GM12878 (cell line): ENCODE measurements at regions of chr12 and their contacts with region 1.

Region 1: GRCh38 chr12:11658791-11659190 is 9.3 kb downstream of the ETV6 start:
- DNase-seq: no peak
- ATAC-seq: no peak
- H3K4me3 ChIP-seq: no peak overlapping the region
- H3K27ac ChIP-seq: no peak overlapping the region
- H3K4me1 ChIP-seq: peaks cover 23% of the 10 kb centered on the region
- H3K27me3 ChIP-seq: no peaks in the 10 kb centered on the region
- CTCF ChIP-seq: no peak
- EP300 ChIP-seq: no peak
- POLR2A ChIP-seq: no peak
- RAD21 ChIP-seq: no peak

Region 2: DNA sequence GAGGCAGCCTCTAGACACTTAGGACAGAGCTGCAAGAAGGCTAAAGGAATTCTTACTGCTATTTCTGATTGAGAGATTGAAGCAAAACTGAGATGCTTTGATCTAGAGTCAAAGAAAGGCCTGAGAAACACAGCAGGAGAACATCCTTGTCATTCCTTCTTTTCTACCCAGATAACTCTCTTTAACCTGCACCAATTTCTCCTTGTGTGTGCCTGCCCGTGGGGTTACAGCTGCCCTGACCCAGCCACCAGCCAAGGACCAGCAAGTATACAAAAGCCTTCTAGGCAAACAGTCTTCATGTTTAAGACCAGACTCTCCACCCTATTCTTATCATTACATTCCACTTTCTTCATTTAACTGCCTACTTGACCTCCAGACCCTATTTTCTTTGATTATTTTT is 181.7 kb before region 1 on chr12:
- CTCF ChIA-PET with region 1: no interaction called
- POLR2A ChIA-PET with region 1: no interaction called
- RAD21 ChIA-PET with region 1: no interaction called
- SMC1A ChIA-PET with region 1: no interaction called
- in situ Hi-C with region 1: no loop called
- intact Hi-C with region 1: no loop called
- DNase-seq: no peak
- ATAC-seq: no peak
- H3K4me3 ChIP-seq: no peak overlapping the region
- H3K27ac ChIP-seq: no peak overlapping the region
- H3K4me1 ChIP-seq: no peaks in the 10 kb centered on the region
- H3K27me3 ChIP-seq: no peaks in the 10 kb centered on the region; a peak in 1 of 4 replicates
- CTCF ChIP-seq: no peak
- EP300 ChIP-seq: no peak
- POLR2A ChIP-seq: no peak
- RAD21 ChIP-seq: no peak

Region 3: DNA sequence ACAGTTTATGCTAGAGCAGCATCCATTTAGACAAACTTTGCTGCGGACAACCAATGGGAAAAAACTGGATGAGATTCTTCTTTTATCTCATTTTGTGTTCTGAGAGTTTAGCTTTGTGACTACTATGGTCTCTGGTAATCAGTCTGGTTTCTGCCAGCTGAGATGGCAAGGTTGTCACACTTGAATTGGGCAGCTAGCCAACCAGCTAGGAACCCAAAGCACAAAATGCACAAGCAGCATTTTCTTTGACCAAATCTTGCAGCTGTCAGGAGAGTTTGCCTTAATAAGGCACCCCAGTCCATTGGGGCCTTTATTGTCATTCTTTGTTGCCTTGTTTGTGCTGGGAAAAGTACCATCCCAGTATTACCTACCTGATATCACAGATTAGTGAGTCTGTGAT is 43.3 kb before region 1 on chr12:
- CTCF ChIA-PET with region 1: no interaction called
- POLR2A ChIA-PET with region 1: no interaction called
- RAD21 ChIA-PET with region 1: no interaction called
- SMC1A ChIA-PET with region 1: no interaction called
- in situ Hi-C with region 1: no loop called
- intact Hi-C with region 1: no loop called
- DNase-seq: no peak
- ATAC-seq: no peak
- H3K4me3 ChIP-seq: no peak overlapping the region
- H3K27ac ChIP-seq: no peak overlapping the region
- H3K4me1 ChIP-seq: no peaks in the 10 kb centered on the region
- H3K27me3 ChIP-seq: no peaks in the 10 kb centered on the region
- CTCF ChIP-seq: no peak
- EP300 ChIP-seq: no peak
- POLR2A ChIP-seq: no peak
- RAD21 ChIP-seq: no peak

Region 4: GRCh38 chr12:11638315-11638916 is 20.4 kb before region 1 on chr12:
- CTCF ChIA-PET with region 1: no interaction called
- POLR2A ChIA-PET with region 1: no interaction called
- RAD21 ChIA-PET with region 1: no interaction called
- SMC1A ChIA-PET with region 1: no interaction called
- in situ Hi-C with region 1: no loop called
- intact Hi-C with region 1: no loop called
- DNase-seq: no peak
- ATAC-seq: no peak
- H3K4me3 ChIP-seq: no peak overlapping the region
- H3K27ac ChIP-seq: no peak overlapping the region
- H3K4me1 ChIP-seq: no peaks in the 10 kb centered on the region
- H3K27me3 ChIP-seq: no peaks in the 10 kb centered on the region
- CTCF ChIP-seq: no peak
- EP300 ChIP-seq: no peak
- POLR2A ChIP-seq: no peak
- RAD21 ChIP-seq: no peak

Region 5: DNA sequence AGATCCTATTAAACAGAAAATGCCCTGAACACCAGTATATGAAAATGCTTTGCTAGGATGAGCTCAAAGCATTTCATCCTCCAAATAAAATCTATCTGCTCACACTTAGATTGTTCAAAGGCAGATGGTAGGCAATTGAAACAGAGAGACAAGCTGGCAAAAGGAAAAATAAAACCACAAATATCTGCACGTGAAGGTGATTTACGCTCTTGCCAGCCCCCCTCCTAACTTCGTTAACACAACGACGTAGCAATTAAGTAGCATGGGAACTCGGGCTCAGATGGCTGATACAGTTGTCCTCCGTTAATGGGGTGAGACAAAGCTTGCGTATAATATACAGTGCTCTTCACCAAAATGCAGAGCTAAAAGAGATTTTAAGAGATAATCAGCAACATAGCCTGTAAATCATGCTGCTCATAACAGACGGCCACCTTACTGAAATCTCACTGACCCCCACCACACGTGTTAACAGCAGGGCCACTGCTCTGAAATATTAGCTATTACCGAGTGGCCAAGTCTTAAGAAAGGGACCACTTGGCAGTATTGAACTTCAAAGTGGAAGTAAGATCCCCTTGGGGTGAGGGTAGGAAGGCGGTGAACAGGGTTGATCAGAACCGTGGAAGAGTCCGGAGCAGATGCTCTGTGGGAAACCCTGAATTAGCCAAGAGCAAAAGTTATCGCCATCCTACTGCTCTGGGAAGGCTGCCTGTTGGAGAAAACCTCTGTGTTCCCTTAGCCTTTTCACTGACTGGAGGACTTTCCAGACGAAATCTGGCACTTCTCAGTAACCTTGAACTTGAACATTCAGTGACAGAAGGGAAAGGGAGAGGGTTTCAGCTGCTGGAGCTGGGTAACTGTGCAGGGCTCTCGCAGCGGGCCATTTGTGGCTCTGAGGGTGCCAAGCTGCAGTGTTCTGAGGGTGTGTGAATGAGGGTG is 13.7 kb after region 1 on chr12:
- CTCF ChIA-PET with region 1: interaction called, 3 read pairs
- POLR2A ChIA-PET with region 1: interaction called, 3 read pairs
- RAD21 ChIA-PET with region 1: interaction called, 3 read pairs
- SMC1A ChIA-PET with region 1: interaction called, 32 read pairs
- in situ Hi-C with region 1: no loop called
- intact Hi-C with region 1: no loop called
- DNase-seq: no peak
- ATAC-seq: no peak
- H3K4me3 ChIP-seq: no peak overlapping the region
- H3K27ac ChIP-seq: no peak overlapping the region
- H3K4me1 ChIP-seq: peaks cover 6% of the 10 kb centered on the region
- H3K27me3 ChIP-seq: no peaks in the 10 kb centered on the region
- CTCF ChIP-seq: no peak
- EP300 ChIP-seq: no peak
- POLR2A ChIP-seq: no peak
- RAD21 ChIP-seq: no peak

Region 6: GRCh38 chr12:11684393-11684792 is 25.6 kb after region 1 on chr12:
- CTCF ChIA-PET with region 1: interaction called, 3 read pairs
- POLR2A ChIA-PET with region 1: interaction called, 3 read pairs
- RAD21 ChIA-PET with region 1: interaction called, 4 read pairs
- SMC1A ChIA-PET with region 1: interaction called, 16 read pairs
- in situ Hi-C with region 1: no loop called
- intact Hi-C with region 1: no loop called
- DNase-seq: no peak
- ATAC-seq: 0 out of 3 replicates have a peak, but pooled peaks have one; percentile 17
- H3K4me3 ChIP-seq: no peak overlapping the region
- H3K27ac ChIP-seq: no peak overlapping the region
- H3K4me1 ChIP-seq: peaks cover 12% of the 10 kb centered on the region
- H3K27me3 ChIP-seq: no peaks in the 10 kb centered on the region
- CTCF ChIP-seq: no peak
- EP300 ChIP-seq: no peak
- POLR2A ChIP-seq: no peak
- RAD21 ChIP-seq: no peak

Region 7: DNA sequence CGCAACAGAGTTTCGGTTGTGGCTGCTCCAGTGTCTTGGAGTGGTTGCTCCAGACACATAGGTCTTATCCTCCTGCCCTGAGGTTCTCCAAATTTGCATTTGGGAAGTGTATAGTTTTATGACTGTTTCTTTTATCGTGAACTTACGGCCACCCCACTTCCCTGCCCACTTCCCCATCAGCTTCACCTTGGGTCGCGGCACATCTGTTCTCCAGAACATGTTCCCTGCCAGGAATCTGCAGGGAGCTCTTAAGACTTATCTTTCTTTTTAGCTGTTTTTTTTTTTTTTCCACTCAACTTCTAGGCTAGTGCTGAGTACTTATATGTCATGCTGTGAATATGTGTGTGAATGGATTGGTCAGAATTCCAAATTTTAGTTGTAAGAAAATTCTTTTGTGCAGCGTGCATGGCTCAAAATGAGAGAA is 66.1 kb after region 1 on chr12:
- CTCF ChIA-PET with region 1: interaction called, 5 read pairs
- POLR2A ChIA-PET with region 1: interaction called, 12 read pairs
- RAD21 ChIA-PET with region 1: interaction called, 75 read pairs
- SMC1A ChIA-PET with region 1: interaction called, 76 read pairs
- in situ Hi-C with region 1: loop called (anchors 5 kb)
- intact Hi-C with region 1: no loop called
- DNase-seq: no peak
- ATAC-seq: no peak
- H3K4me3 ChIP-seq: peak overlapping the region; percentile 8; the same call in 1 of the 2 replicates
- H3K27ac ChIP-seq: peak overlapping the region; percentile 89
- H3K4me1 ChIP-seq: peaks cover 98% of the 10 kb centered on the region
- H3K27me3 ChIP-seq: no peaks in the 10 kb centered on the region
- CTCF ChIP-seq: no peak
- EP300 ChIP-seq: no peak
- POLR2A ChIP-seq: no peak
- RAD21 ChIP-seq: no peak